ENCODE measurements at regions of chr7 and their contacts with region 1.

Region 1: DNA sequence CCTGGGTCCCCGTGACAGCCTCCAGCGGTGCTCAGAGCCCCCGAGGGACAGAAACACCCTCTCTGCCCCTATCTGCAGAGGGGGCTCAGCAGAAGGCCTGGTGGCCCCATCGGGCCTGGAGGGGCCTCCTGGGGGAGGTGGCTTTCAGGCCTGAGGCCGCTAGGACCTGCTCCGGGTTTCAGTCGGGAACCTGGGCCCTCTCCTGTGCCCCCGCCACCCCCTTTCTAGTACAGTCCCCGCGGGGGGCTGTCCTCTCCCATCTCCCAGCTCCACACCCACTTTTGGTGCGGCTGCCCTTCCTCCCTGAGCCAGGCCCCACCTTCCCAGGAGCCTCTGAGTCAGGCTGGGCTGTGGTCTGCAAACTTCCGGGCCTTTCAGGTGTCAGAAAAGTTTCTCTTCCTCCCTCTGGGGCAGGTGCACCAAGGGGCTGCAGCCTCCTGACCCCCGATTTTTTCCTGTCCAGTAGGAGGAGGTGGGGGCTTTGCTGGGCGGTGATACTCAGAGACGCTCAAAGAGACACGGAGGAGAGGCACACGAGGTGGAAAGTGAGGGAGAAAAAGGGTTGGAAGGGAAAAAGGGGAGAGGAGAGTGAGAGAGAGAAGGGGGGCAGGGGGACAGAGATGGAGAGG is 692 bp downstream of the CARD11 start:
- DNase-seq: peak; percentile 59 to 71 (median 65)
- ATAC-seq: peak; percentile 86
- H3K4me3 ChIP-seq: peak overlapping the region; percentile 70
- H3K27ac ChIP-seq: peak overlapping the region; percentile 70; the same call in 1 of the 3 replicates
- H3K4me1 ChIP-seq: peaks cover 0 to 20% of the 10 kb centered on the region in 2 experiments; a peak in 3 of 5 replicates
- H3K27me3 ChIP-seq: no peaks in the 10 kb centered on the region
- CTCF ChIP-seq: no peak
- EP300 ChIP-seq: no peak
- POLR2A ChIP-seq: no peak
- RAD21 ChIP-seq: no peak

Region 2: DNA sequence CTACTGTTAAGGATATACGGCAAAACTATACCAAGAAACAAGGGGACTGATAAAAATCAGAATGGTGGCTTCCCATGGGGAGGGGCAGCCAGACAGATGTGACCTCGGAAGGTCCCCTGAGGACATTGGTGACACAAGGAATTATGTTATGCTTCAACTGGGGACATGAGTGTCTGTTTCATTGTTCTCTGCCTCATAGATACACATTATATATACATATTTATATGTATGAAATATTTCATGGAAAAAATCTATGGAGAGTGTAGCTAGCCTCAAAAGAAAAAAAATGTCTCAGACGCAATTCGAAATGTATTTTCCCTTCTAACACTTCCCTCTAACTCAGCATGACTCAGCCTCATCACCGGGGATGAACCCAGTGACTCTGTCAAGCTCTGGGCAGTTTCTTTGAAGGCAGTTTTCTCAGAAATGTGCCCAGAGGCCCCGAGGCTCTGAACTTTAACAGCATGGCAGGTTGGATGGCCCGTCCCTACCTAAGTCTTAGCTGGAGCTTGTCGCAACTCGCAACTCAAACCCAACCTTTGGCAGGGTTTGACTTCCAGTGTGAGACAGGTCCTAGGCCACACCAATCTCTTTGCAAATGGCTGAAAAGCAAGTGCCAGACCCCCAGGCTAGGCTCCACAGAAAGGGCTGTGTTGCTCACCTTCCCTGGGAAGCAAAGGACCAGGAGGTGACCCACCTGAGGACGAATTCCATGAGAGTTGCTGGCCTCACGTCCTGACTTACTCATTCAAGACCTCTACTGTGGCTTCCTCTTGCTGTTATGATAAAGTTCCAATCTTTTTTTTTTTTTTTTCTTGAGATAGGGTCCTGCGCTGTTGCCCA is 86.2 kb before region 1 on chr7:
- CTCF ChIA-PET with region 1: no interaction called
- POLR2A ChIA-PET with region 1: no interaction called
- in situ Hi-C with region 1: no loop called
- intact Hi-C with region 1: loop called (anchors 5 kb)
- DNase-seq: peak; percentile 55 to 85 (median 69)
- ATAC-seq: peak; percentile 87
- H3K4me3 ChIP-seq: no peak overlapping the region
- H3K27ac ChIP-seq: peak overlapping the region; percentile 99
- H3K4me1 ChIP-seq: peaks cover 49 to 51% of the 10 kb centered on the region in 2 experiments
- H3K27me3 ChIP-seq: no peaks in the 10 kb centered on the region
- CTCF ChIP-seq: no peak
- EP300 ChIP-seq: peak; percentile 81
- POLR2A ChIP-seq: peak; percentile 52
- RAD21 ChIP-seq: peak in 1 of 2 experiments; percentile 5; a peak in 1 of 4 replicates

Region 3: GRCh38 chr7:3103614-3104398 is 60.8 kb after region 1 on chr7:
- CTCF ChIA-PET with region 1: no interaction called
- POLR2A ChIA-PET with region 1: no interaction called
- in situ Hi-C with region 1: no loop called
- intact Hi-C with region 1: no loop called
- DNase-seq: no peak
- ATAC-seq: no peak
- H3K4me3 ChIP-seq: no peak overlapping the region
- H3K27ac ChIP-seq: no peak overlapping the region
- H3K4me1 ChIP-seq: no peaks in the 10 kb centered on the region
- H3K27me3 ChIP-seq: peaks cover 21 to 58% of the 10 kb centered on the region in 2 experiments; a peak in 4 of 5 replicates
- CTCF ChIP-seq: no peak
- EP300 ChIP-seq: no peak
- POLR2A ChIP-seq: no peak
- RAD21 ChIP-seq: no peak

Measured in K562 (cell line).